Right lobe of liver (tissue), 6 donors: ENCODE measurements at regions of chr2 and their contacts with region 1.

Region 1: DNA sequence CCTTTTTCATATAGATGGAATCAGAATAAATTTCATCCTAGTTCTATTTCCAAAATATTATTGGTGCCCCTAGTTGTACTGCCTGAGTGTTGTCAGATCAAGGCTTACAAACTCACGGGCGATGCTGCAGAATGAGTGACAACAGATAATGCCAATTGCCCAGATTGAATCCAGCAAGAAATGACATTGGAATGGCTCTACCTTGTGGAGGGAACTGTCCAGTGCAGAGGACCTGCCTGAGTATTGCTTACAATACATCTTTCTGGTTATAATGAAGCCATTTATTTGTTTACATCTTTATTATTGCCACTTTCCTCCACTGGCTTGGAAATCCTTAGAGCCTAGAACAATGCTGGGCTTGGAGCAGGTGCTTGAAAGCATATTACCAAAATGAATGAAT is 7.8 kb upstream of the IL1R2 start:
- DNase-seq: no peak
- ATAC-seq: peak; percentile 33 to 72 (median 55)
- H3K4me3 ChIP-seq: no peak overlapping the region
- H3K27ac ChIP-seq: no peak overlapping the region
- H3K4me1 ChIP-seq: peaks cover 0 to 15% (median 7%) of the 10 kb centered on the region in 4 donors
- H3K27me3 ChIP-seq: no peaks in the 10 kb centered on the region
- CTCF ChIP-seq: peak; percentile 42 to 69 (median 46)
- POLR2A ChIP-seq: no peak

Region 2: DNA sequence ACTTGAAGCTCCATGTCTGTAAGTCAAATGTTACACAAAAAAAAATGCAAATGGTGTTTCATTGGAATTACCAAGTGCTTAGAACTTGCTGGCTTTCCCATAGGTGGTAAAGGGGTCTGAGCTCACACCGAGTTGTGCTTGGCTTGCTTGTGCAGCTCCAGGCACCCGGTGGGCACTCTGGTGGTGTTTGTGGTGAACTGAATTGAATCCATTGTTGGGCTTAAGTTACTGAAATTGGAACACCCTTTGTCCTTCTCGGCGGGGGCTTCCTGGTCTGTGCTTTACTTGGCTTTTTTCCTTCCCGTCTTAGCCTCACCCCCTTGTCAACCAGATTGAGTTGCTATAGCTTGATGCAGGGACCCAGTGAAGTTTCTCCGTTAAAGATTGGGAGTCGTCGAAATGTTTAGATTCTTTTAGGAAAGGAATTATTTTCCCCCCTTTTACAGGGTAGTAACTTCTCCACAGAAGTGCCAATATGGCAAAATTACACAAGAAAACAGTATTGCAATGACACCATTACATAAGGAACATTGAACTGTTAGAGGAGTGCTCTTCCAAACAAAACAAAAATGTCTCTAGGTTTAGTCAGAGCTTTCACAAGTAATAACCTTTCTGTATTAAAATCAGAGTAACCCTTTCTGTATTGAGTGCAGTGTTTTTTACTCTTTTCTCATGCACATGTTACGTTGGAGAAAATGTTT is 90.1 kb before region 1 on chr2:
- intact Hi-C with region 1: loop called in 1 of 2 experiments (anchors 10 kb)
- DNase-seq: no peak
- ATAC-seq: peak in 3 of 4 donors; percentile 41 to 58 (median 43)
- H3K4me3 ChIP-seq: no peak overlapping the region
- H3K27ac ChIP-seq: no peak overlapping the region
- H3K4me1 ChIP-seq: peaks cover 0 to 15% (median 4%) of the 10 kb centered on the region in 4 donors
- H3K27me3 ChIP-seq: no peaks in the 10 kb centered on the region
- CTCF ChIP-seq: no peak
- POLR2A ChIP-seq: no peak

Region 3: GRCh38 chr2:102033031-102033749 is 49.3 kb after region 1 on chr2:
- intact Hi-C with region 1: no loop called
- DNase-seq: peak; percentile 54 to 81 (median 79)
- ATAC-seq: peak; percentile 49 to 69 (median 66)
- H3K4me3 ChIP-seq: peak overlapping the region in 1 of 3 donors; percentile 5
- H3K27ac ChIP-seq: peak overlapping the region; percentile 49 to 83 (median 71)
- H3K4me1 ChIP-seq: peaks cover 0 to 51% (median 26%) of the 10 kb centered on the region in 4 donors
- H3K27me3 ChIP-seq: no peaks in the 10 kb centered on the region
- CTCF ChIP-seq: no peak
- POLR2A ChIP-seq: peak; percentile 18